Thyroid gland (tissue), 4 donors: ENCODE measurements at regions of chr4 and their contacts with region 1.

Region 1: DNA sequence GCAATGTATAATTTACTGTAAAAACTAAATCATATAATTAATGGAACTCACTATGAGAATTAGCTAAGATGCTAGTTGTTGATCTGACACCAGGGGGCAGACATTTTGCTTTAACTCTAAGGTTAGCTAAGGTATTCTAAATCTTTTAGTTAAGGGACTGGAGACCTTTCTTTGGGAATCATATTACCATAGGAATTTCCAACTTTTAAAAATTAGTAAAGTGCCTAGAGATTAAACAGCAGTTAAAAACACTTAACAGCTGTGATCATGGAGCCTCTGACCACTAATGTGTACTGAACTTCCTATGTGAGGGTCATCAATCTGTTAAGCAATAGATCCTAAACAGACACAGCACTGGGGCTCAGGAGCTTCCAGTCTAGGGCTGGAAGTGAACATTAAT is 226.6 kb downstream of the NSUN7 start:
- DNase-seq: peak; percentile 43 to 48
- H3K4me3 ChIP-seq: no peak overlapping the region
- H3K27ac ChIP-seq: no peak overlapping the region
- H3K4me1 ChIP-seq: peaks cover 0 to 4% of the 10 kb centered on the region in 2 donors
- H3K27me3 ChIP-seq: no peaks in the 10 kb centered on the region
- CTCF ChIP-seq: peak; percentile 41 to 77 (median 70)
- POLR2A ChIP-seq: no peak

Region 2: GRCh38 chr4:41133454-41134018 is 157.2 kb after region 1 on chr4:
- intact Hi-C with region 1: no loop called
- DNase-seq: peak in 1 of 2 donors; percentile 24
- H3K4me3 ChIP-seq: no peak overlapping the region
- H3K27ac ChIP-seq: peak overlapping the region; percentile 73 to 95 (median 91)
- H3K4me1 ChIP-seq: peaks cover 77 to 85% of the 10 kb centered on the region in 2 donors
- H3K27me3 ChIP-seq: no peaks in the 10 kb centered on the region
- CTCF ChIP-seq: no peak
- POLR2A ChIP-seq: no peak

Region 3: GRCh38 chr4:41214136-41214824 is 237.9 kb after region 1 on chr4 and contains the start of gene APBB2:
- intact Hi-C with region 1: loop called (anchors 5 kb)
- DNase-seq: peak; percentile 97 to 98
- H3K4me3 ChIP-seq: peak within 1 kb of the TSS; percentile 11 to 96 (median 85)
- H3K27ac ChIP-seq: peak within 1 kb of the TSS; percentile 78 to 89 (median 87)
- H3K4me1 ChIP-seq: peaks cover 24 to 45% of the 10 kb centered on the region in 2 donors
- H3K27me3 ChIP-seq: no peaks in the 10 kb centered on the region
- CTCF ChIP-seq: peak; percentile 53 to 95 (median 74)
- POLR2A ChIP-seq: peak; percentile 54 to 99
- total RNA-seq, gene APBB2: 174 to 253 (median 199) TPM